ENCODE measurements at regions of chr2 and their contacts with region 1.

Region 1: GRCh38 chr2:176157499-176158185 is 535 bp downstream of the HOXD3 start:
- DNase-seq: peak; percentile 66
- H3K4me3 Mint-ChIP-seq: no peak overlapping the region
- H3K27ac Mint-ChIP-seq: peak overlapping the region; percentile 72
- H3K4me1 Mint-ChIP-seq: peaks cover 2% of the 10 kb centered on the region
- H3K27me3 Mint-ChIP-seq: peaks cover 82% of the 10 kb centered on the region

Region 2: GRCh38 chr2:174334781-174335251 is 1822.8 kb before region 1 on chr2 and contains the start of gene SP9:
- intact Hi-C with region 1: loop called (anchors 5 kb)
- DNase-seq: peak; percentile 73
- H3K4me3 Mint-ChIP-seq: peak within 1 kb of the TSS; percentile 45
- H3K27ac Mint-ChIP-seq: peak within 1 kb of the TSS; percentile 75
- H3K4me1 Mint-ChIP-seq: peaks cover 25% of the 10 kb centered on the region
- H3K27me3 Mint-ChIP-seq: peaks cover 71% of the 10 kb centered on the region
- total RNA-seq, gene SP9: not detected in 2 replicates

Region 3: DNA sequence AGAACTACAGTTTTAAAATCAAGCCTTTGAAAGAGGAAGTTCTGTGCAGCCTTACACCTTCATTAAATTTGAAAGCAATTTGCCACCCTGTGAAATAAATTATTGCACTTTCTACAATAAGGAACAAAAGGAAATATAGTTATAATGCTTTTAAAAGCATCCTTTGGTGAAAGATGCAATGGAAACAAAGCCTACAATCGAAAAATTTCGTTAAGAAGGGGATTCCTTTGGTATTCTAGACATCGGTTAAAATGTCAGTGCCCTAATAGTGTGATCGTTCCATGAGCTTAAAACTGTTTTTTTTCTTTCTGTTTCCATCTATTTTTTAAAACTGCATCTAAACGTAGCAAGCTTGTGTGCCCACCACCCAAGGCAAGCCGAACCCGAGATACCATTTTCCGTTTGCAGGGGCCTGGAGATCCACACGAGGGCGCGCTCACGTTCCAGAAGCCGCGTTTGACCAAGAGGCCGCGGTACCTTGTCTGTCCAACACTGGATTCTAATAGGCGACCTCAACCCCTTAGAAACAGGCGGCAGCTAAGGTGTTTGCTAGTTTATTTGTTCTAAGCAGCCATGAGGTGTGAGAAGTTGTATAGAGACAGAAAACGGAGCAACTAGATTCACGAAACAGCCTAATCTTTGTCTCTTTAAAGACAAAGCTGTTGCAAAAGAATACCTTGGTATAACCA is 46.5 kb before region 1 on chr2:
- intact Hi-C with region 1: loop called (anchors 2 kb)
- DNase-seq: no peak
- H3K4me3 Mint-ChIP-seq: no peak overlapping the region
- H3K27ac Mint-ChIP-seq: peak overlapping the region; percentile 12
- H3K4me1 Mint-ChIP-seq: peaks cover 6% of the 10 kb centered on the region
- H3K27me3 Mint-ChIP-seq: peaks cover 76% of the 10 kb centered on the region

Measured in activated CD4-positive, alpha-beta T cell treated with anti-CD3 and anti-CD28 coated beads, Interleukin-2, amount 10 ng/mL, durations not matched to agents 24 days and 14 days (primary cell).